ENCODE measurements at regions of chr2 and their contacts with region 1.

Region 1: DNA sequence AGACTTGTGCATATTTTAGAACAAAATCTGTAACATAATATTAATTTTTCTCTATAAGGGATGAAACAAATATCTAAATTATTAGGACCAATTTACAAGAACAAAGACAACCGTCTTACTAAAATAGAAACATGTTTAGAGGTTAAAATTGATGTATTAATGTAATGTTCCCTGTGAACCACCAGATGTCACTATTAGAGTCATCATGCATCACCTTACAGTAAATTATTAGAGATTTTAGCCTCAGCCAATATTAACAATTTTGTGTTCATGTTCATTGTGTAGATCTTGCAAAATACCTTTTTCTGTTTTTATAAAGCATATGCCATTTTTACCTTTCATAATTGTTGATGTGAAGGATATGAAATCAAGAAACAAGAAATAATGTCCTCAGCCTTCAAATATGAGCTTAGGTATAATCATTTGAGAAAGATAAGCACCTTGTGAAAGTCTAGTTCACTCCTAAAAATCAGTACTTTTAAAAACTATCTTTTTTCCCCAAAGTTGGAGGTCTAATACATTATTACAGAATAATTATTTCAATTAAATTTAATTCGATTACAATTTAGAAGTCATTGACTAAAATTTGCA is 344.3 kb upstream of the KCNH7 start:
- DNase-seq: peak; percentile 19
- H3K4me3 ChIP-seq: no peak overlapping the region
- H3K27ac ChIP-seq: no peak overlapping the region
- H3K4me1 ChIP-seq: no peaks in the 10 kb centered on the region
- H3K27me3 ChIP-seq: no peaks in the 10 kb centered on the region
- CTCF ChIP-seq: peak; percentile 70
- EP300 ChIP-seq: no peak
- RAD21 ChIP-seq: peak; percentile 63

Region 2: GRCh38 chr2:163171786-163172531 is 10.9 kb before region 1 on chr2:
- CTCF ChIA-PET with region 1: interaction called, 80 read pairs
- POLR2A ChIA-PET with region 1: no interaction called
- DNase-seq: no peak
- H3K4me3 ChIP-seq: no peak overlapping the region
- H3K27ac ChIP-seq: no peak overlapping the region
- H3K4me1 ChIP-seq: peaks cover 0 to 3% of the 10 kb centered on the region in 2 experiments; a peak in 2 of 4 replicates
- H3K27me3 ChIP-seq: no peaks in the 10 kb centered on the region
- CTCF ChIP-seq: no peak
- EP300 ChIP-seq: no peak
- RAD21 ChIP-seq: no peak

Region 3: DNA sequence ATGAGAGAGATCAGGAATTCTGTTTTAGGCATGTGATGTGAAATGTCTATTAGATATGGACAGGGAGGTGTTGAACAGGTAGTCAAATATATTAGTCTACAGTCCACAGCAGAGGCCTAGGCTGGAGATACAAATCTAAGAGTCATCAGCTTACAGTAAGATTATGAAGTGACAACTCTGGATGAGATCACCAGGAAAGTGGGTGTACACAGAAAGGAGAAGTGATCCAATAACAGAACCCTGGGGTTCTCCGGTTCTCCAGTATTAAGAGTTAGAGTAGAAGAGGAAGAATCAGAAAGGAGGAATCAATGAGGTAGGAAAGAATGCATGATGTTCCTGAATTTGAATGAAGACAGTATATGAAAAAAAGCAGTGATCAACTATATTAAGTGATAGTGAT is 190.6 kb after region 1 on chr2:
- CTCF ChIA-PET with region 1: no interaction called
- POLR2A ChIA-PET with region 1: no interaction called
- DNase-seq: no peak
- H3K4me3 ChIP-seq: no peak overlapping the region
- H3K27ac ChIP-seq: no peak overlapping the region
- H3K4me1 ChIP-seq: no peaks in the 10 kb centered on the region; a peak in 1 of 4 replicates
- H3K27me3 ChIP-seq: no peaks in the 10 kb centered on the region
- CTCF ChIP-seq: no peak
- EP300 ChIP-seq: no peak
- RAD21 ChIP-seq: no peak

Region 4: GRCh38 chr2:164473021-164473420 is 1290.2 kb after region 1 on chr2:
- CTCF ChIA-PET with region 1: interaction called, 46 read pairs
- POLR2A ChIA-PET with region 1: no interaction called
- DNase-seq: no peak
- H3K4me3 ChIP-seq: no peak overlapping the region
- H3K27ac ChIP-seq: no peak overlapping the region
- H3K4me1 ChIP-seq: no peaks in the 10 kb centered on the region
- H3K27me3 ChIP-seq: peaks cover 8% of the 10 kb centered on the region; the same call in 1 of the 2 replicates
- CTCF ChIP-seq: no peak
- EP300 ChIP-seq: no peak
- RAD21 ChIP-seq: no peak

Region 5: GRCh38 chr2:164485541-164485940 is 1302.7 kb after region 1 on chr2:
- CTCF ChIA-PET with region 1: interaction called, 46 read pairs
- POLR2A ChIA-PET with region 1: no interaction called
- DNase-seq: no peak
- H3K4me3 ChIP-seq: no peak overlapping the region
- H3K27ac ChIP-seq: no peak overlapping the region
- H3K4me1 ChIP-seq: no peaks in the 10 kb centered on the region
- H3K27me3 ChIP-seq: no peaks in the 10 kb centered on the region
- CTCF ChIP-seq: no peak
- EP300 ChIP-seq: no peak
- RAD21 ChIP-seq: no peak

Measured in SK-N-SH (cell line).